K562 (cell line): ENCODE measurements at regions of chr12 and their contacts with region 1.

Region 1: DNA sequence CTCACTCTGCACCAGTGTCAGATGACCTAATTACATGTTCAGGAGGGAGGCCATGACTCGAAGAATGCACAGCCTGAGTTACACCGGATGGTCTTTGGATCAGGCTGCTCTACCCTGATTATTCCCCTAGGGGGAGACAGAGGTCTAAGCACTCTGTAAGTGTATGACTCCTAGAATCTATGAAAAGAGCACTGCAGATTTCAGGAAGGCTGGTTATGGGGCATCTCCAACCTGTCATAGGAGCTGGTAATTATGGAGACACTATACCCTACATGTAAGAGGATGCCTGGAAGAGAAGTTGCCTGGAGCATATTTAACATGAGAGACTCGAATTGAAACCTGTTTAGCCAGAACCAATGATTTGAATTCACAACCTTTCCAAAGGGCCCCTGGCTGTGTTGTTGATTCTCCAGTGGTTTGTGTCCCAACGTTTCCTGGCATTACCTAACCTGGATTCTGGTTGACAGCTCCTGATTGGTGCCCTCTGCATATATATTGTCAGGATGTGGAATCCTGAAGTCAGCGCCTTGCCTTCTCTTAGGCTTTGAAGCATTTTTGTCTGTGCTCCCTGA is at the start of gene MUCL1:
- DNase-seq: peak; percentile 69 to 79 (median 74)
- ATAC-seq: peak; percentile 99
- H3K4me3 ChIP-seq: no peak within 1 kb of the TSS
- H3K27ac ChIP-seq: no peak within 1 kb of the TSS
- H3K4me1 ChIP-seq: no peaks in the 10 kb centered on the region
- H3K27me3 ChIP-seq: no peaks in the 10 kb centered on the region; a peak in 1 of 5 replicates
- CTCF ChIP-seq: peak; percentile 76 to 91 (median 77)
- EP300 ChIP-seq: no peak
- POLR2A ChIP-seq: no peak
- RAD21 ChIP-seq: peak; percentile 96
- polyA plus RNA-seq, gene MUCL1: not detected

Region 2: GRCh38 chr12:54759751-54760150 is 94.3 kb before region 1 on chr12:
- CTCF ChIA-PET with region 1: no interaction called
- POLR2A ChIA-PET with region 1: no interaction called
- in situ Hi-C with region 1: no loop called
- intact Hi-C with region 1: loop called (anchors 5 kb)
- DNase-seq: peak in 2 of 4 experiments; percentile 17 to 53
- ATAC-seq: peak; percentile 86
- H3K4me3 ChIP-seq: no peak overlapping the region
- H3K27ac ChIP-seq: no peak overlapping the region
- H3K4me1 ChIP-seq: no peaks in the 10 kb centered on the region
- H3K27me3 ChIP-seq: no peaks in the 10 kb centered on the region
- CTCF ChIP-seq: peak; percentile 59 to 75 (median 75); a peak in 5 of 6 replicates
- EP300 ChIP-seq: no peak
- POLR2A ChIP-seq: no peak
- RAD21 ChIP-seq: peak; percentile 81 to 85

Region 3: GRCh38 chr12:54935235-54935951 is 81.3 kb after region 1 on chr12:
- CTCF ChIA-PET with region 1: interaction called, 6 read pairs
- POLR2A ChIA-PET with region 1: no interaction called
- in situ Hi-C with region 1: no loop called
- intact Hi-C with region 1: loop called (anchors 2 kb)
- DNase-seq: peak; percentile 49 to 75 (median 62)
- ATAC-seq: peak; percentile 92
- H3K4me3 ChIP-seq: no peak overlapping the region
- H3K27ac ChIP-seq: peak overlapping the region; percentile 80; the same call in 2 of the 3 replicates
- H3K4me1 ChIP-seq: peaks cover 0 to 29% of the 10 kb centered on the region in 2 experiments; a peak in 3 of 5 replicates
- H3K27me3 ChIP-seq: no peaks in the 10 kb centered on the region
- CTCF ChIP-seq: peak; percentile 12 to 55 (median 17); a peak in 3 of 6 replicates
- EP300 ChIP-seq: peak; percentile 62; the same call in 1 of the 2 replicates
- POLR2A ChIP-seq: no peak
- RAD21 ChIP-seq: peak; percentile 75 to 76